MCF 10A (cell line): ENCODE measurements at regions of chr17 and their contacts with region 1.

Region 1: GRCh38 chr17:35747540-35748017 is 5.5 kb downstream of the GAS2L2 start:
- DNase-seq: peak; percentile 80
- H3K4me3 Mint-ChIP-seq: no peak overlapping the region
- H3K27ac Mint-ChIP-seq: no peak overlapping the region
- H3K4me1 Mint-ChIP-seq: peaks cover 10% of the 10 kb centered on the region
- H3K27me3 Mint-ChIP-seq: peaks cover 16% of the 10 kb centered on the region
- CTCF ChIP-seq: peak; percentile 95

Region 2: DNA sequence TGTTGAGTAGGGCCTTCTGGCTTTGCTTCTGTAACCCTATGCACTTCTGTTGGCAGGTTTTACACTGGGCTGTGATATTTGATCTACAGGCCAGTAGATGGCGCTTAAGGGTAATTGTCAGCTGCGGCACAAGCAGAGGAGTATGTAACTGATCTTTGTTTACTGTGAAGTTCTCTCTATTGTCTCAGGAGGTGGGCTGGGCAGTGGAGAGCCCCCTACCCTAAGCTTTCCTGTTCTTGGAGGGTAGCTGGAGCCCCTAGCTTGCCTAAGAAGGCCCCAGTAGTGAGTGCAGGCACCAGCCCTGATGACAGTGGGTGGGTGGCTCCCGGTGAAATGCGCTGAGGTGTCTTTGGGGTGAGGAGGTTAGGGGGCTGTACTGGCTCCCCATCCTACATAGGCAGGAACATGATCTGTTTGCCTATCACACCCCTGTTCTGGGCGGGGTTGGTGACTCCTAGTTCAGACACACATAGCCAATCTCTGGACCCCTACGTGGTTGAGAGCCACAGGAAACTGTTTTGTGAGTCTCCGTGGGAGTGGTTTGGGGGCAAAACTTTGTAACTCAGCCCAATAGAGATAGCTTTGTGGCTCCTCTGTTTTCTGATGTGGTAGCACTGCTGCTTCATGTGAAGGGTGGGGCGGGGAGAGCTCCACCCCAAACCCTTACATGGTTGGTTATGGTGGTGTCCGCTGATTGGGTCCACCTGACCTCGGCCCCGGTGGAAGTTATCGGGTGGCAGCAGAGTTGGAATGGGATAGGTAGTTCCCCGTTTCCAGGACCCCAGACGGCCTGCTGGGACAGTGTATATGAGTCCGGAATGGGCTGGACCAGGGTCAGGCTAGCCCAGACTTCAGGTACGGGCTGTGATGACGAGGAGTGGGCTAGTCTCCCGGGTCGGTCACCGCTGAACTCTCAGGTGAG is 434.5 kb before region 1 on chr17:
- CTCF ChIA-PET with region 1: no interaction called
- POLR2A ChIA-PET with region 1: no interaction called
- intact Hi-C with region 1: loop called (anchors 10 kb)
- DNase-seq: peak; percentile 77
- H3K4me3 Mint-ChIP-seq: no peak overlapping the region
- H3K27ac Mint-ChIP-seq: no peak overlapping the region
- H3K4me1 Mint-ChIP-seq: peaks cover 14% of the 10 kb centered on the region
- H3K27me3 Mint-ChIP-seq: peaks cover 81% of the 10 kb centered on the region
- CTCF ChIP-seq: peak; percentile 77

Region 3: DNA sequence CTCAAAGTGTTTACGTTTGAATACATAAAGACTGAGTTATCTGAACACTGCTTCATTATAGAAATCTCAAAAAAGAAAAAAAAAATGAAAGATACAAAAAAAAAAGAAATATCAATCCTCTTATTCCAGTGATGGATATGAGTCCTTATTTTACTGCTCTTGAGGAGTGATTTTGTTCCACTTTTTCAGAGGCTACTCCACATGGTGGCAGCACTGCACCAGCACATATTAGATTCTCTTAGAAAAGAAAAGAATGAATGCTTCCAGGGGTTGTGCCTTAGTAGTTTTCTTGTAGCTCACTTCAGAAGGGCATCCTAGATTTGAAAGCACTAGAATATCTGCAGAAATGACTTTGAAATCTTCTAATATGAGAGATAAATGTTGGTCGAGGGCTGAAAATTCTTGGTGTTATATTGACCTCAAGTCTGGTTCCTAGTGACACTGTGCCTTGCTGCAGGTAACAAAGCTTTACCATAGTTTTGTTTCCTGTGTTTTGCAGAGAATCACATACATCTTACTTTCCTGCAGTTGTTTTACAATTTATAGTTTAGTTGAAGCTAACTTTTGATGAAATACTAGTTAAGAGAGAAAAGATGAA is 134.6 kb before region 1 on chr17:
- CTCF ChIA-PET with region 1: interaction called, 150 read pairs
- POLR2A ChIA-PET with region 1: interaction called, 4 read pairs
- intact Hi-C with region 1: loop called (anchors 1 kb)
- DNase-seq: peak; percentile 36
- H3K4me3 Mint-ChIP-seq: no peak overlapping the region
- H3K27ac Mint-ChIP-seq: no peak overlapping the region
- H3K4me1 Mint-ChIP-seq: no peaks in the 10 kb centered on the region
- H3K27me3 Mint-ChIP-seq: no peaks in the 10 kb centered on the region
- CTCF ChIP-seq: peak; percentile 48

Region 4: GRCh38 chr17:35695613-35696012 is 52.0 kb before region 1 on chr17:
- CTCF ChIA-PET with region 1: interaction called, 11 read pairs
- POLR2A ChIA-PET with region 1: no interaction called
- intact Hi-C with region 1: no loop called
- DNase-seq: no peak
- H3K4me3 Mint-ChIP-seq: no peak overlapping the region
- H3K27ac Mint-ChIP-seq: peak overlapping the region; percentile 63
- H3K4me1 Mint-ChIP-seq: no peaks in the 10 kb centered on the region
- H3K27me3 Mint-ChIP-seq: no peaks in the 10 kb centered on the region
- CTCF ChIP-seq: no peak

Region 5: DNA sequence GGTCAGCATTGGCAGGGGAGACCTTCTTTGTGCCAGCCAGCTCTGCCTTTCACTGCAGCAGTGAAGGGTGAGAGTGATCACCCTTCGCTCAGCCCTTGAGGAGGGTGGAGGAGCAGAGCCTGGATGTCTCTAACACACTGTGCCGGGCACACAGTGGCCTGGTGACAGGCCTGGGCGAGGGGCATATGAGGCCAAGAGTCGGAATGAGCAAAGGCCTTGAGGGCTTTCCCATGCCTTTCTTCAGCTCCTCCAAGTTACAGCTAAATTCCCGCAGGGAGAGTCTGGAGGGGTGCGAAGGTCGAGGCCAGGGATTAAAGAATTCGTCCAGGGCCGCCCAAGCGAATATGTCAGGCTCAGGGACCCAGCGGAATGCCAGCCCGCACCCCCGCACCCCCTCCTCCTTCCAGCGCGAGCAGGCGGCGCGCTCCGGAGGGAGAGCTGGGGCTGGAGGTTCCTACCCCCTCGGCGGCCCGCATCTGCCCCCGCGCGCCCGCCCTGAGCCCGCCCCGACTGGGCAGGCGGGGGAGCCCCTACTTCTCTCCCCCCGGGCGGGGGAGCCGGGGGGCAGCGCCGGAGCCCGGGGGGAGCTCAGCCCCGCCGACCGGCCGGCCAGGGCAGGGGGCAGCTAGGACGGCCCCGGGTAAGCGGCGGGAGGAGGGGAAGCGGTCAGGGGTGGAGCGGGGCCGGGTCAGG is 16.2 kb before region 1 on chr17 and contains the start of gene RASL10B:
- CTCF ChIA-PET with region 1: interaction called, 81 read pairs
- POLR2A ChIA-PET with region 1: no interaction called
- intact Hi-C with region 1: no loop called
- DNase-seq: no peak
- H3K4me3 Mint-ChIP-seq: peak within 1 kb of the TSS; percentile 50
- H3K27ac Mint-ChIP-seq: no peak within 1 kb of the TSS
- H3K4me1 Mint-ChIP-seq: peaks cover 16% of the 10 kb centered on the region
- H3K27me3 Mint-ChIP-seq: no peaks in the 10 kb centered on the region
- CTCF ChIP-seq: no peak
- total RNA-seq, gene RASL10B: 0.09 and 0.10 TPM in 2 replicates